Colonic mucosa (tissue), 4 donors: ENCODE measurements at regions of chr5 and their contacts with region 1.

Region 1: DNA sequence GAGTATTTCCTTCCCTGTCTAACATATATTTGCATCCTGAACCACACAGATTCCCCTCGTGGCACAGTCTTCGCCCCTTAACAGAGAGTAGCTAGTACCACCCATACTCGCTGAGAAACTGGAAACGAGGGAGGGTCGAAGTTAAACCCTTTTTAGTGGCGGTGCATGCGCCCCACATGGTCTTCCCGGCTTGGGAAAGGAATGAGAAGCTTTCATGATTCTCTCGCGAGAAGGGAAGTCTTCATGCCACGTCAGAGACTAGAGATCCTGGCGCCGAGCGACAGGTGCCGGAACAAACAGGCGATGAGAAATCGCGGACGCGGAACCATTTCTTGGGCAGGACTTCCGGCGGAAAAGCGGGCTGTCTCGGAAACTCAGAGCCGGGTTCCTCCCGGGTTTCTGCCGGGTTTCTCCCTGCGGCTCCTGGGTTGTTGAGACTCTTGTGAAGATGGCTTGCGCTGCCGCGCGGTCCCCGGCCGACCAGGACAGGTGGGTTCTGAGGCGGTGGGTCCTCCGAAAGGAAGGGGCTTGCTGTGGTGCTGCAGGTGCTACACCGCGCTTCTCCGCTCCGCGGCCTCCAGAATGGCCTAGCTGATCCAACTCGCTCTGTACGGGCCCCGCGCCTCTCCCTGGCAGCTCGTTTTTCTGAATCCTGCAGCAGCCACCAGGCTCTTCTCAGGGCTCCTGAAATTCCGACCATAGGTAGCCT is at the start of gene SRP19:
- DNase-seq: peak; percentile 95
- H3K4me3 ChIP-seq: peak within 1 kb of the TSS; percentile 89
- H3K27ac ChIP-seq: peak within 1 kb of the TSS; percentile 69
- H3K4me1 ChIP-seq: peaks cover 10% of the 10 kb centered on the region
- H3K27me3 ChIP-seq: peaks cover 5% of the 10 kb centered on the region
- CTCF ChIP-seq: no peak
- total RNA-seq, gene SRP19: 27.0 to 33.2 TPM

Region 2: DNA sequence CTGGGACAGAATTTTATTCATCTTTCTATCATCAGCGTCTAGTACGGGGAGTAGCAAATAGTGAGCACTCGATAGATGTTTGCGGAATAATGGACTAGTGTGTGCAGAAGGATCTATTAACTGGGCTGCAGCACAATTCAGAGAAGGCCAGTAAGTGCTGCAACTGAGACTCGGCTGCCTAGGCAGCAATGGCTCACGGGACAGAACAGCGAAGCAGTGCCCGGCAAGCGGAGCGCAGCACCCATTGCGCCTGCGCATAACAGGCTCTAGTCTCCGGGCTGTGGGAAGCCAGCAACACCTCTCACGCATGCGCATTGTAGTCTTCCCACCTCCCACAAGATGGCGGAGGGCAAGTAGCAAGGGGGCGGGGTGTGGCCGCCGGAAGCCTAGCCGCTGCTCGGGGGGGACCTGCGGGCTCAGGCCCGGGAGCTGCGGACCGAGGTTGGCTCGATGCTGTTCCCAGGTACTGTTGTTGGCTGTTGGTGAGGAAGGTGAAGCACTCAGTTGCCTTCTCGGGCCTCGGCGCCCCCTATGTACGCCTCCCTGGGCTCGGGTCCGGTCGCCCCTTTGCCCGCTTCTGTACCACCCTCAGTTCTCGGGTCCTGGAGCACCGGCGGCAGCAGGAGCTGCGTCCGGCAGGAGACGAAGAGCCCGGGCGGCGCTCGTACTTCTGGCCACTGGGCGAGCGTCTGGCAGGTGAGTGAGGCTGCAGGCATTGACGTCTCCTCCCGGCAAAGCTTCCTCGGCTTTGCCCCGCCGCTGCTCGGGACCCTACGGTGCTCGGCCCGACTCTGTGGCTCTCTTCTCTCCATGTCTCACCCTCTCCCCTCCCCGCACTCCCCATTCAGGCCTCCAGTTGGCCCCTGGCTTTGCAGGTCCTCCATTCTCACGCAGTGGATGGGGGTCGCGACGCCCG is 153.6 kb before region 1 on chr5:
- intact Hi-C with region 1: loop called (anchors 5 kb)
- DNase-seq: peak; percentile 99
- H3K4me3 ChIP-seq: peak overlapping the region; percentile 93
- H3K27ac ChIP-seq: peak overlapping the region; percentile 94
- H3K4me1 ChIP-seq: peaks cover 11% of the 10 kb centered on the region
- H3K27me3 ChIP-seq: no peaks in the 10 kb centered on the region
- CTCF ChIP-seq: no peak

Region 3: GRCh38 chr5:113147101-113147508 is 286.0 kb after region 1 on chr5:
- intact Hi-C with region 1: no loop called
- DNase-seq: no peak
- H3K4me3 ChIP-seq: no peak overlapping the region
- H3K27ac ChIP-seq: no peak overlapping the region
- H3K4me1 ChIP-seq: no peaks in the 10 kb centered on the region
- H3K27me3 ChIP-seq: no peaks in the 10 kb centered on the region
- CTCF ChIP-seq: no peak